Mammary epithelial cell (primary cell): ENCODE measurements at regions of chr2 and their contacts with region 1.

Region 1: DNA sequence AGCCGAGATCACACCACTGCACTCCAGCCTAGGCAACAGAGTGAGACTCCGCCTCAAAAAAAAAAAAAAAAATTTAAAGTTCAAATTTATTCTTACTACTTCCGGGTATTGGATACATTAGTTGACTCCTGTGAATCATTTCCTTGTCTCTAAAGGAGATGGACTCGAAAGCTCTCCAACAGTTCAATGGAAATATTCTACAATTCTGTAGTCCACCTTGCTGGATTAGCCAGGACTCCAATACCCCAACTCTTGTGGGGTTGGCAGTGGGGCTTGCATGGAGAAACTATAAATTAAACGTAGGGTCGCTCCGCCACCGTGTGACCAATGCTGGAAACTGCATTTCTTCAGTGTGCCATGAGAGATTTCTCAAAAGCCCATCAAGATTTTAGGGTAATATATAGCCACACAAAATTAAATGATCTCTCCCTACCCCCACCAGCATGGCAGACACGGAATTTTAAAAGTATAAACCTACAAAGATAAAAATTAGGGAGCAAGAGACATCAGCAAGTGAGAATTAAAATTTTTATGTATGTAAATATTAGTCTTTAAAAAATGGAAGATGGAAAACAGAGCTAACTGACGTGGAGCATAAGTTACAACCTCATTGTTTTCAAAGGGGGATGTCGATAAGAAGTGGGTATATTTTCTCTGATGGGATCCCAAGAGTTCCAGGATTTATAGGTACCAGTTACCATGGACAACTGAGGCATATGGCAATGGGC is 27.8 kb upstream of the GAREM2 start:
- DNase-seq: peak; percentile 39
- H3K4me3 ChIP-seq: no peak overlapping the region
- H3K27ac ChIP-seq: no peak overlapping the region
- H3K4me1 ChIP-seq: no peaks in the 10 kb centered on the region
- H3K27me3 ChIP-seq: no peaks in the 10 kb centered on the region
- CTCF ChIP-seq: peak; percentile 69 to 77

Region 2: GRCh38 chr2:25614686-25615085 is 530.4 kb before region 1 on chr2:
- CTCF ChIA-PET with region 1: no interaction called
- dilution Hi-C with region 1: no loop called
- in situ Hi-C with region 1: no loop called
- intact Hi-C with region 1: no loop called
- DNase-seq: no peak
- H3K4me3 ChIP-seq: no peak overlapping the region
- H3K27ac ChIP-seq: no peak overlapping the region
- H3K4me1 ChIP-seq: peaks cover 24% of the 10 kb centered on the region
- H3K27me3 ChIP-seq: no peaks in the 10 kb centered on the region
- CTCF ChIP-seq: no peak

Region 3: GRCh38 chr2:25851740-25852503 is 293.2 kb before region 1 on chr2:
- CTCF ChIA-PET with region 1: no interaction called
- dilution Hi-C with region 1: no loop called
- in situ Hi-C with region 1: no loop called
- intact Hi-C with region 1: loop called (anchors 1 kb)
- DNase-seq: peak; percentile 70
- H3K4me3 ChIP-seq: no peak overlapping the region
- H3K27ac ChIP-seq: peak overlapping the region; percentile 7
- H3K4me1 ChIP-seq: peaks cover 7% of the 10 kb centered on the region
- H3K27me3 ChIP-seq: no peaks in the 10 kb centered on the region
- CTCF ChIP-seq: peak; percentile 67 to 72

Region 4: DNA sequence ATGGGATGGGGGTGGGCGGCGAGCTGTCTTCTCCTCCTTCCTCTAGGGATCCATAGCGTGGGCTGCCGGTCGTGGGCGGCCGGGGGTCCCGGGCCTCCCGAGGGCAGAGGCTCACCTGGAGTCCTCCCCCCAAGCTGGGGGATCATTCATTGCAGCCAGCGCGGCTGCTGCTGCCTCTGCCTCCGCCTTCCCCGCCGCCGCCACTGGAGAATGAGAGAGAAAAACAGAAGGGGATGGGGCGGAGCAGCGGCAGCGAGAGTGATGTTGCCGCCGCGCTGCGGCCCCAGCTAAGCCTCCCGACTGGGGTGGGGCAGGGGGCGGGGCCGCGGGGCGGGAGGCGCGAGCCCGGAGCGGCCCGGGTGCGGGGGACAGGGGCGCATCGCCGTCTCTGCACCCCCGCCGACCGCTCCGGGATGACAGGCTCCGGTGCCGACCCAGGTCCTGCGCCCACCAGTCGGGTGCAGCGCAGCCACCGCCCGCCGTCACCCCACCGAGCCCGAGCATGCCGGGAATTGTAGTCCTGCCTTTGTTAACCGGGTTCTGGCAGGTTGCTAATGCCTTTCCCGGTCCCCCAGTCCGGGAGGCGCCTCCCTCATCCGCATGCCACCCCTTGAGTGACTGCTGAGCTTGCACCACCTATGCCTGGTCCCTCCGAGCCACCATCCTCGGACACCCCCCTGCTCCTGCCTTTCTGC is 162.7 kb before region 1 on chr2 and contains the start of gene KIF3C:
- CTCF ChIA-PET with region 1: no interaction called
- dilution Hi-C with region 1: no loop called
- in situ Hi-C with region 1: loop called in 1 of 2 experiments (anchors 10 kb)
- intact Hi-C with region 1: no loop called
- DNase-seq: peak; percentile 70
- H3K4me3 ChIP-seq: peak within 1 kb of the TSS; percentile 74 to 91 (median 78)
- H3K27ac ChIP-seq: peak within 1 kb of the TSS; percentile 68
- H3K4me1 ChIP-seq: peaks cover 30% of the 10 kb centered on the region
- H3K27me3 ChIP-seq: no peaks in the 10 kb centered on the region
- CTCF ChIP-seq: no peak
- total RNA-seq, gene KIF3C: 30.7 to 35.3 TPM

Region 5: GRCh38 chr2:26088032-26088643 is 57.0 kb before region 1 on chr2:
- CTCF ChIA-PET with region 1: no interaction called
- dilution Hi-C with region 1: no loop called
- in situ Hi-C with region 1: no loop called
- intact Hi-C with region 1: loop called (anchors 2 kb)
- DNase-seq: no peak
- H3K4me3 ChIP-seq: no peak overlapping the region
- H3K27ac ChIP-seq: no peak overlapping the region
- H3K4me1 ChIP-seq: peaks cover 6% of the 10 kb centered on the region
- H3K27me3 ChIP-seq: no peaks in the 10 kb centered on the region
- CTCF ChIP-seq: peak; percentile 67 to 74

Region 6: GRCh38 chr2:26172871-26173775 is 28.0 kb after region 1 on chr2 and contains the start of gene GAREM2:
- CTCF ChIA-PET with region 1: no interaction called
- dilution Hi-C with region 1: no loop called
- in situ Hi-C with region 1: no loop called
- intact Hi-C with region 1: no loop called
- DNase-seq: no peak
- H3K4me3 ChIP-seq: peak within 1 kb of the TSS; percentile 21 to 42 (median 38)
- H3K27ac ChIP-seq: no peak within 1 kb of the TSS
- H3K4me1 ChIP-seq: no peaks in the 10 kb centered on the region
- H3K27me3 ChIP-seq: peaks cover 6% of the 10 kb centered on the region
- CTCF ChIP-seq: no peak
- total RNA-seq, gene GAREM2: 0.16 to 0.67 TPM

Region 7: GRCh38 chr2:26438526-26438925 is 293.4 kb after region 1 on chr2:
- CTCF ChIA-PET with region 1: no interaction called
- dilution Hi-C with region 1: no loop called
- in situ Hi-C with region 1: no loop called
- intact Hi-C with region 1: no loop called
- DNase-seq: no peak
- H3K4me3 ChIP-seq: no peak overlapping the region
- H3K27ac ChIP-seq: no peak overlapping the region
- H3K4me1 ChIP-seq: no peaks in the 10 kb centered on the region
- H3K27me3 ChIP-seq: no peaks in the 10 kb centered on the region
- CTCF ChIP-seq: no peak

Region 8: GRCh38 chr2:26469092-26469710 is 324.1 kb after region 1 on chr2:
- CTCF ChIA-PET with region 1: no interaction called
- dilution Hi-C with region 1: no loop called
- in situ Hi-C with region 1: no loop called
- intact Hi-C with region 1: loop called (anchors 5 kb)
- DNase-seq: peak; percentile 45
- H3K4me3 ChIP-seq: no peak overlapping the region
- H3K27ac ChIP-seq: no peak overlapping the region
- H3K4me1 ChIP-seq: no peaks in the 10 kb centered on the region
- H3K27me3 ChIP-seq: no peaks in the 10 kb centered on the region
- CTCF ChIP-seq: peak; percentile 80 to 88